CD8-positive, alpha-beta T cell (primary cell): ENCODE measurements at regions of chr12 and their contacts with region 1.

Region 1: DNA sequence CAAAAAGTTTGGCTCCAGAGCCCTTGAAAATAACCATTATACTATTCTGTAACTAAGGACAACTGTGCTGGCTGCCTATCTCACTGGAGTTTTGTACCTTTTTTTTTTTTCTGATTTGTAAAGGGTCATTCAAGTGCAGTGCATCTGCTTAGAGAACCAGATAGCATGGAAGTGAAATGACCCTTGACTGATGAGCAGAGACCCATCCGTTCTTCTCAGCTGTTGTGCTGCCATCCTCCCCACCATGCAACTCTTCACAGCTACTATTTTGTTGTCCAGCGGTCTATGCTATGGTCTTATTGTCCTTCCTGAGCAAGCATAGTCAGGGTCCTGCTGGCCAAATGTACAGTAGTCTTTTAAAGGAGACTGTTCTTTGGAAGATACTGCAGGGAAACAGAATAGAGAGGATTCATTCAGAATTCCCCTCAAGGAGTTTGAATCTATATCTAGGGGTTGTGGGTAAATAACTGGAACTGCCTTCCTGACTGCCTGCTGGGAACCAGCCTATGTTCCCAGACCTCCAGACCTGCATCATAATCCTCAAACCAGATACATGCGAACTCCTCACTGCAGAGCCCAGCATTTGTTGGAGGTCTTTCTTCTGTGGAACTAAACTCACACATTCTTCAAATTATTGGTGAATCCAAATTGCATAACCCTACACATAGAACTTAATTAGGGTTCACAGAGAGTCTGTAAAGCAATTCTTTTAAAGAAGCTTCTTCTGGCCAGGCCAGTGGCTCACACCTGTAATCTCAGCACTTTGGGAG is 41.1 kb downstream of the GPR19 start:
- DNase-seq: no peak
- ATAC-seq: no peak
- H3K4me3 ChIP-seq: no peak overlapping the region
- H3K4me3 Mint-ChIP-seq: no peak overlapping the region
- H3K27ac ChIP-seq: no peak overlapping the region
- H3K27ac Mint-ChIP-seq: no peak overlapping the region
- H3K4me1 ChIP-seq: no peaks in the 10 kb centered on the region
- H3K4me1 Mint-ChIP-seq: peaks cover 11% of the 10 kb centered on the region
- H3K27me3 ChIP-seq: no peaks in the 10 kb centered on the region
- H3K27me3 Mint-ChIP-seq: no peaks in the 10 kb centered on the region
- CTCF ChIP-seq: no peak

Region 2: GRCh38 chr12:12482959-12483358 is 171.9 kb before region 1 on chr12:
- CTCF ChIA-PET with region 1: interaction called, 4 read pairs
- POLR2A ChIA-PET with region 1: no interaction called
- intact Hi-C with region 1: loop called in 1 of 2 experiments (anchors 5 kb)
- DNase-seq: no peak
- ATAC-seq: no peak
- H3K4me3 ChIP-seq: peak overlapping the region in 1 of 2 experiments; percentile 11
- H3K4me3 Mint-ChIP-seq: peak overlapping the region; percentile 47
- H3K27ac ChIP-seq: peak overlapping the region; percentile 73 to 83
- H3K27ac Mint-ChIP-seq: peak overlapping the region; percentile 99
- H3K4me1 ChIP-seq: peaks cover 28% of the 10 kb centered on the region
- H3K4me1 Mint-ChIP-seq: peaks cover 52% of the 10 kb centered on the region
- H3K27me3 ChIP-seq: no peaks in the 10 kb centered on the region
- H3K27me3 Mint-ChIP-seq: no peaks in the 10 kb centered on the region
- CTCF ChIP-seq: no peak

Region 3: GRCh38 chr12:12562585-12563261 is 92.2 kb before region 1 on chr12 and contains the start of gene DUSP16:
- CTCF ChIA-PET with region 1: interaction called, 12 read pairs
- POLR2A ChIA-PET with region 1: no interaction called
- intact Hi-C with region 1: loop called (anchors 1 to 2 kb)
- DNase-seq: peak; percentile 50 to 95 (median 75)
- ATAC-seq: peak; percentile 65
- H3K4me3 ChIP-seq: peak within 1 kb of the TSS; percentile 77 to 80
- H3K4me3 Mint-ChIP-seq: peak within 1 kb of the TSS; percentile 95
- H3K27ac ChIP-seq: peak within 1 kb of the TSS; percentile 92 to 96
- H3K27ac Mint-ChIP-seq: peak within 1 kb of the TSS; percentile 99
- H3K4me1 ChIP-seq: peaks cover 16% of the 10 kb centered on the region
- H3K4me1 Mint-ChIP-seq: peaks cover 43% of the 10 kb centered on the region
- H3K27me3 ChIP-seq: no peaks in the 10 kb centered on the region
- H3K27me3 Mint-ChIP-seq: no peaks in the 10 kb centered on the region
- CTCF ChIP-seq: no peak
- total RNA-seq, gene DUSP16: 27.9 to 34.1 TPM

Region 4: GRCh38 chr12:12622418-12622817 is 32.5 kb before region 1 on chr12:
- CTCF ChIA-PET with region 1: interaction called, 11 read pairs
- POLR2A ChIA-PET with region 1: no interaction called
- intact Hi-C with region 1: no loop called
- DNase-seq: peak in 4 of 9 experiments; percentile 19 to 74 (median 36)
- ATAC-seq: peak; percentile 91
- H3K4me3 ChIP-seq: peak overlapping the region in 1 of 2 experiments; percentile 15
- H3K4me3 Mint-ChIP-seq: peak overlapping the region; percentile 67
- H3K27ac ChIP-seq: peak overlapping the region; percentile 50 to 66
- H3K27ac Mint-ChIP-seq: peak overlapping the region; percentile 87
- H3K4me1 ChIP-seq: peaks cover 48% of the 10 kb centered on the region
- H3K4me1 Mint-ChIP-seq: peaks cover 73% of the 10 kb centered on the region
- H3K27me3 ChIP-seq: no peaks in the 10 kb centered on the region
- H3K27me3 Mint-ChIP-seq: no peaks in the 10 kb centered on the region
- CTCF ChIP-seq: no peak

Region 5: DNA sequence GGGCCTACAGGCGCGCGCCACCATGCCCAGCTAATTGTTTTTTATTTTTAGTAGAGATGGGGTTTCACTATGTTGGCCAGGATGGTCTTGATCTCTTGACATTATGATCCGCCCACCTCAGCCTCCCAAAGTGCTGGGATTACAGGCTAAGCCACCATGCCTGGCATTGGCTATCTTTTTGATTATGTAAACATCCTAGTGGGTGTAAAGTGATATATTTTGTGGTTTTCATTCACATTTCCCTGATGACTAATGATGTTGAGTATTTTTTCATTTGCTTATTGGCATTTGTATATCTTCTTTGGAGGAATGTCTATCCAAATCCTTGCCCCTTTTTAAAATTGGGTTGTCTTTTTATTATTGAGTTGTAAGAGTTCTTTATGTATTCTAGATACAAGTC is 26.9 kb before region 1 on chr12:
- CTCF ChIA-PET with region 1: interaction called, 11 read pairs
- POLR2A ChIA-PET with region 1: no interaction called
- intact Hi-C with region 1: no loop called
- DNase-seq: no peak
- ATAC-seq: no peak
- H3K4me3 ChIP-seq: no peak overlapping the region
- H3K4me3 Mint-ChIP-seq: no peak overlapping the region
- H3K27ac ChIP-seq: no peak overlapping the region
- H3K27ac Mint-ChIP-seq: no peak overlapping the region
- H3K4me1 ChIP-seq: peaks cover 44% of the 10 kb centered on the region
- H3K4me1 Mint-ChIP-seq: peaks cover 79% of the 10 kb centered on the region
- H3K27me3 ChIP-seq: no peaks in the 10 kb centered on the region
- H3K27me3 Mint-ChIP-seq: no peaks in the 10 kb centered on the region
- CTCF ChIP-seq: no peak

Region 6: DNA sequence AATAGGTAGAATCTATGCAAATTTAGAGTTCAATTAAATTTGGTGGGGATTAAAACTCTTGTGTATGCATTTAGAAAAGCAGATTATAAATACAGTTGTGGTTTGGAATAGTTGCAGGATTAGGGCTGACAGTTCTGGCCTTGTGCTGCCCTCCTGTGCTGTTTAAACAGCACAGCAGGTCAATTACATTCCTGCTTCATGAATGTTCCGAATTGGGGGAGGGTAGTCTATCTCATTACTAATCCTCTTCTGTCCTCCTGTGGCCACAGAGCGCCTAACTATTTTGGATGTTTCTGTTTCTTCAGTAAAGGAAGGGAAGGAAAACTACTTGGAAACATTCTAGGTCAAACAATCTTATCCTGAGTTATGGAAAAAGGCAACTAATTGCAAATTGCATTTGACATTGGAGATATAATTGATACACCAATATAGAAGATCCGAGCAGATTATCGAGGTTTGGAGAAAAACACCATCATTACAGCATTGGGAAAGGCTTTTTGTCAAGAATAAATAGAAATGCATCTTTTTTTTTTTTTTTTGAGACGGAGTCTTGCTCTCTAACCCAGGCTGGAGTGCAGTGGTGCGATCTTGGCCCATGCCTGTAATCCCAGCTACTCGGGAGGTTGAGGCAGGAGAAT is 49.8 kb after region 1 on chr12:
- CTCF ChIA-PET with region 1: interaction called, 12 read pairs
- POLR2A ChIA-PET with region 1: interaction called, 5 read pairs
- intact Hi-C with region 1: loop called (anchors 2 to 5 kb)
- DNase-seq: peak in 5 of 9 experiments; percentile 24 to 77 (median 35)
- ATAC-seq: peak; percentile 75
- H3K4me3 ChIP-seq: no peak overlapping the region
- H3K4me3 Mint-ChIP-seq: peak overlapping the region; percentile 50
- H3K27ac ChIP-seq: no peak overlapping the region
- H3K27ac Mint-ChIP-seq: peak overlapping the region; percentile 33
- H3K4me1 ChIP-seq: peaks cover 35% of the 10 kb centered on the region
- H3K4me1 Mint-ChIP-seq: peaks cover 21% of the 10 kb centered on the region
- H3K27me3 ChIP-seq: no peaks in the 10 kb centered on the region
- H3K27me3 Mint-ChIP-seq: no peaks in the 10 kb centered on the region
- CTCF ChIP-seq: peak; percentile 60

Region 7: DNA sequence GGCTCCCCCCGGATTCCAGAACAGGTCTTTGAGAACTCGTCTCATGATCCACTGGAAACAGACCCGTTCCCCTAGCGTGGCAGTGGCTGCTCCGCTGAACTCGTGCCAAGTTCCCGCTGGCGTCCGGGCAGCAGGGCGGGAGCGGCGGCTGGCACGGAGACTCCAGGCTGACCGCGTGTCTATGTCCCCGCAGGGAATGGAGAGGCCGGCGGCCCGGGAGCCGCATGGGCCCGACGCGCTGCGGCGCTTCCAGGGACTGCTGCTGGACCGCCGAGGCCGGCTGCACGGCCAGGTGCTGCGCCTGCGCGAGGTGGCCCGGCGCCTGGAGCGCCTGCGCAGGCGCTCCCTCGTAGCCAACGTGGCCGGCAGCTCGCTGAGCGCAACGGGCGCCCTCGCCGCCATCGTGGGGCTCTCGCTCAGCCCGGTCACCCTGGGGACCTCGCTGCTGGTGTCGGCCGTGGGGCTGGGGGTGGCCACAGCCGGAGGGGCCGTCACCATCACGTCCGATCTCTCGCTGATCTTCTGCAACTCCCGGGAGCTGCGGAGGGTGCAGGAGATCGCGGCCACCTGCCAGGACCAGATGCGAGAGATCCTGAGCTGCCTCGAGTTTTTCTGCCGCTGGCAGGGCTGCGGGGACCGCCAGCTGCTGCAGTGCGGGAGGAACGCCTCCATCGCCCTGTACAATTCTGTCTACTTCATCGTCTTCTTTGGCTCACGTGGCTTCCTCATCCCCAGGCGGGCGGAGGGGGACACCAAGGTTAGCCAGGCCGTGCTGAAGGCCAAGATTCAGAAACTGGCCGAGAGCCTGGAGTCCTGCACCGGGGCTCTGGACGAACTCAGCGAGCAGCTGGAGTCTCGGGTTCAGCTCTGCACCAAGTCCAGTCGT is 132.1 kb after region 1 on chr12:
- CTCF ChIA-PET with region 1: no interaction called
- POLR2A ChIA-PET with region 1: no interaction called
- intact Hi-C with region 1: no loop called
- DNase-seq: peak; percentile 47 to 90 (median 71)
- ATAC-seq: peak; percentile 90
- H3K4me3 ChIP-seq: peak overlapping the region; percentile 68 to 70
- H3K4me3 Mint-ChIP-seq: peak overlapping the region; percentile 77
- H3K27ac ChIP-seq: peak overlapping the region; percentile 72 to 73
- H3K27ac Mint-ChIP-seq: peak overlapping the region; percentile 87
- H3K4me1 ChIP-seq: peaks cover 16% of the 10 kb centered on the region
- H3K4me1 Mint-ChIP-seq: peaks cover 22% of the 10 kb centered on the region
- H3K27me3 ChIP-seq: no peaks in the 10 kb centered on the region
- H3K27me3 Mint-ChIP-seq: no peaks in the 10 kb centered on the region
- CTCF ChIP-seq: no peak